ENCODE measurements at regions of chr2 and their contacts with region 1.

Region 1: GRCh38 chr2:69914170-69914960 is 544 bp upstream of the MXD1 start:
- DNase-seq: peak; percentile 100
- H3K4me3 ChIP-seq: peak overlapping the region in 3 of 4 donors; percentile 8 to 70 (median 47)
- H3K27ac ChIP-seq: peak overlapping the region; percentile 88 to 99 (median 95)
- H3K4me1 ChIP-seq: peaks cover 6 to 29% of the 10 kb centered on the region in 2 donors
- H3K27me3 ChIP-seq: no peaks in the 10 kb centered on the region
- CTCF ChIP-seq: peak in 2 of 6 experiments; percentile 4 to 9
- POLR2A ChIP-seq: peak; percentile 78 to 79

Region 2: DNA sequence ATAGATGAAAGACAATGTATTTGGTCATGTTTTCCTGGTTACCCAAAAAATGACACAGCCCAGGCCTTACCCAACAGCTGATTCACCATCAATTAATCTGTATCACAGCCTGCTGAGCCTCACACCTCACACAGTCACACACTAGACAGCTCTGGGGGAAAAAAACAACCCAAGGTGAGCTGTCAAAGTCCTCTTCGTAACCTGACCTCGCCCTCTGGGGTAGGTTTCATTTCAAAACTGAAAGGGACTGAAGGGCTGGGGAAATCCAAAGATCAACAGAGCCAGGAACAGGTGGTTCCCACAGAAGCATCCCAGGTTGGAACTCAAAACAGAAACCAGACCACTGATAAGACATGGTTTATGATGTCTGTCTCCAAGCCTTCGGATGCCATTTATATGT is 154.7 kb after region 1 on chr2:
- intact Hi-C with region 1: loop called in 1 of 2 experiments (anchors 10 kb)
- DNase-seq: peak in 2 of 7 donors; percentile 35 to 50
- H3K4me3 ChIP-seq: no peak overlapping the region
- H3K27ac ChIP-seq: peak overlapping the region in 3 of 5 donors; percentile 0 to 39 (median 6)
- H3K4me1 ChIP-seq: peaks cover 8 to 14% of the 10 kb centered on the region in 2 donors
- H3K27me3 ChIP-seq: no peaks in the 10 kb centered on the region
- CTCF ChIP-seq: no peak
- POLR2A ChIP-seq: no peak

Region 3: DNA sequence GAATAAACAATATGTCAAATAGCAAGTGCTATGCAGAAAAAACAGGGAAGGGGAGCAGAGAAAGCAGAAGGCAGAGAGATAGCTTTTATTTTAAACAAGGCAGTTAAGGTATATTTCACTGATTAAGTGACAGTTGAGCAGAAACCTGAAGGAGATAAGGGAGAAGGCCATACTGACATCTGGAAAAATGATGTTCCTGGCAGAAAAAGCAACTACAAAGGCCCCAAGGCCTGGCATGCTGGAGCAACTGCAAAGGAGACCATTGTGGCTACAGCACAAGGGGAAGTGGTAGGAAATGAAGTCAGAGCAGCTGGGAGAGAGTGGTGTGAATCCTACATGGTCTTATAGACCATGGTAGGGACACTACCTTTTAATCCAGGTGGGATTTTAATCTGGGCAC is 164.0 kb after region 1 on chr2:
- intact Hi-C with region 1: loop called in 1 of 2 experiments (anchors 5 kb)
- DNase-seq: peak in 1 of 7 donors; percentile 50
- H3K4me3 ChIP-seq: no peak overlapping the region
- H3K27ac ChIP-seq: peak overlapping the region in 3 of 5 donors; percentile 43 to 56 (median 48)
- H3K4me1 ChIP-seq: peaks cover 6 to 20% of the 10 kb centered on the region in 2 donors
- H3K27me3 ChIP-seq: no peaks in the 10 kb centered on the region
- CTCF ChIP-seq: no peak
- POLR2A ChIP-seq: no peak

Region 4: GRCh38 chr2:70142590-70143313 is 228.4 kb after region 1 on chr2:
- intact Hi-C with region 1: loop called (anchors 5 to 10 kb)
- DNase-seq: peak; percentile 99 to 100 (median 100)
- H3K4me3 ChIP-seq: peak overlapping the region in 2 of 4 donors; percentile 33 to 68
- H3K27ac ChIP-seq: peak overlapping the region; percentile 84 to 100 (median 98)
- H3K4me1 ChIP-seq: peaks cover 11 to 19% of the 10 kb centered on the region in 2 donors
- H3K27me3 ChIP-seq: no peaks in the 10 kb centered on the region
- CTCF ChIP-seq: peak; percentile 89 to 100 (median 99)
- POLR2A ChIP-seq: peak; percentile 69 to 85